ENCODE measurements at regions of chr10 and their contacts with region 1.

Region 1: DNA sequence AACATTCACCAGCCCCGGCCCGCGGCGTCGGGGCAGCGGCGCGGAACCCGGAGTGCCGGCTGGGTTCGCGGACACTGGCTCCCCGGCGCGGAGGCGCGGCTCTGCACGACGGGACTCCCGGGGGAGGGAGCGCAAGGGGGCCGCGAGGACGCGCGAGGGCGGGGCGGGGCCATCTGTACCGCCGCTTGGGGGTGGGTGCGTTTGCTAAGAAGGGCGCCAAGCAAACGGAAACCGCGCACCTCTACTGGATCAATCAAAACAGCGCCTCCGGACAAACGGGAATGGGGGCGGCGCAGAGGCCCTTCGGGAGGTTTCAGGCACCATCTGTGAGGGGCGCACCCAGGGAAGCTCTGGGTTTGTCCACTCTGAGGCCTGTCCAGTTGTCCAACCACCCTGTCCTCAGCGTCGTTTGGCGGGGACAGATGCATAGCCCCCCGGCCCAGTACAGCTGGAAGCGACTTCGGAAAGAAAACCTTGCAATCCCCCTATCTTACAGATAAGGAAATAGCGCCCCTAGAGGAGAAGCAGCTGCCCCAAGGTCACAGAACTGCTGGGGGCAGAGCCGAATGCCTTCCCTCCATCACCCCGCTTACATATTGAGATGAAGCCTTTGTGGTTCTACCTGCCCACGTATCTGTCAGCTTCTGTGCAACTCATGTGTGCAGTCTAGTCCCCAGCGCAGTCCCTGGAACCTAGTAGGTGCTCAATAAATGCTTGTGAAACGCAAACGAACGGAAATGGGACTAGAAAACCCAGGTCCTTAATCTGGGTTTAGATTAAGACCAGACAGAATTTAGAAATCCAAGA is 10.7 kb upstream of the SLIT1 start:
- DNase-seq: peak; percentile 23 to 83 (median 67)
- ATAC-seq: peak; percentile 92
- H3K4me3 ChIP-seq: peak overlapping the region; percentile 62 to 86
- H3K4me3 Mint-ChIP-seq: peak overlapping the region; percentile 85
- H3K27ac ChIP-seq: no peak overlapping the region
- H3K27ac Mint-ChIP-seq: peak overlapping the region; percentile 22
- H3K4me1 ChIP-seq: peaks cover 7% of the 10 kb centered on the region
- H3K4me1 Mint-ChIP-seq: peaks cover 9% of the 10 kb centered on the region
- H3K27me3 ChIP-seq: peaks cover 0 to 4% of the 10 kb centered on the region in 2 experiments
- H3K27me3 Mint-ChIP-seq: peaks cover 12% of the 10 kb centered on the region
- CTCF ChIP-seq: peak; percentile 80

Region 2: DNA sequence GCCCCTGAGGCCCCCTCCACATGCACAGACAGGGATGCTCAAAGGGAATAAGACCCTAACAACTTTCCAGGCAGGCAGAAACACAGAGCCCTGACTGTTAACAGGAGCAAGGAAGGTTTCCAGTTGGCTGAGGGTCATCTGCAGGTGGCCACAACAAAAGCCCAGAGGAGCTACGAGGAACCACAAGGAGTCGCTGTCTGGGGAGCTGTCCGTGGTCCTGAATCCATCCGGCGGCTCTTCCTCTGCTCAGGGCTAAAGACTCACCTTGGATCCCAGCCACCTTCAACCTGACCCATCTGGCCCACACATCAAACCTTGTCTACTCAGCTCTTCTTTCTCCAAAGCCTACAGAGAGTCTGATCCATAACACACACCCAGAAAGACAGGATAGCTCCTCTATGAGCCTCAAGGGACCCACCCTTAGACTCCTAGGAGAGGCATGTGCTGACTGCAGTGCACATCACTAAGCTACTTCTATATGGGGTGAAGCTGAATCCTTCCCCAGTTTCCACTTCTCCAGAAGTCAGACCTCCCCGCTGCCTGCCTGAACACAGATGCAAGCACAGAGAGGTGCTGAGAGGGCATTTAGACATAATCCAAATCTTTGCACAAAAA is 114.7 kb before region 1 on chr10:
- CTCF ChIA-PET with region 1: interaction called, 602 read pairs
- POLR2A ChIA-PET with region 1: no interaction called
- intact Hi-C with region 1: loop called in 1 of 2 experiments (anchors 5 kb)
- DNase-seq: peak; percentile 28 to 71 (median 57)
- ATAC-seq: peak; percentile 44
- H3K4me3 ChIP-seq: no peak overlapping the region
- H3K4me3 Mint-ChIP-seq: no peak overlapping the region
- H3K27ac ChIP-seq: no peak overlapping the region
- H3K27ac Mint-ChIP-seq: no peak overlapping the region
- H3K4me1 ChIP-seq: no peaks in the 10 kb centered on the region
- H3K4me1 Mint-ChIP-seq: no peaks in the 10 kb centered on the region
- H3K27me3 ChIP-seq: peaks cover 0 to 2% of the 10 kb centered on the region in 2 experiments
- H3K27me3 Mint-ChIP-seq: peaks cover 28% of the 10 kb centered on the region
- CTCF ChIP-seq: peak; percentile 55

Region 3: DNA sequence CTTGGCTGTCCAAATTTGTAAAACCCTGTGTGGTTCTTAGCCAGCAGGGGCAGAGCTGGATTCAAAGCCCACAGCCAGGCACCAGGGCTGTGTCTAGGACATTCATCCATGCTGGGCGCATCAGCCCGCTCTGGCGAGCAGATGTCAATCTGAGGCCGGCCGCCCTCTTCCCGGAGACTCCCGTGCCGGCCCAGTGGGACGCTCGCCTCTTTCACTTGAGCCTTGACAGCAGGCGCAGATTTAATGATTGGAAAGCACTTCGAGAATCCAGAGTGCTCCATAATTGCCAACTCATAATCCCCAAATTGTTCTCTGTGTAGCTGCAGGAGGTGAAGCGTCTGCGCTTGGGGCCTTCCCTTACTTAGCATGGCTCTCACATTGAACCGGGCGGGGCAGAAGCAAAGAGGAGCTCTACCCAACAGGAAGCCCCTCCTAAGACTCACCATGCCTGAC is 47.3 kb before region 1 on chr10:
- CTCF ChIA-PET with region 1: no interaction called
- POLR2A ChIA-PET with region 1: no interaction called
- intact Hi-C with region 1: no loop called
- DNase-seq: no peak
- ATAC-seq: no peak
- H3K4me3 ChIP-seq: no peak overlapping the region
- H3K4me3 Mint-ChIP-seq: no peak overlapping the region
- H3K27ac ChIP-seq: no peak overlapping the region
- H3K27ac Mint-ChIP-seq: no peak overlapping the region
- H3K4me1 ChIP-seq: no peaks in the 10 kb centered on the region
- H3K4me1 Mint-ChIP-seq: no peaks in the 10 kb centered on the region
- H3K27me3 ChIP-seq: no peaks in the 10 kb centered on the region
- H3K27me3 Mint-ChIP-seq: no peaks in the 10 kb centered on the region
- CTCF ChIP-seq: no peak